Lower leg skin (tissue), 4 donors: ENCODE measurements at regions of chr1 and their contacts with region 1.

Region 1: DNA sequence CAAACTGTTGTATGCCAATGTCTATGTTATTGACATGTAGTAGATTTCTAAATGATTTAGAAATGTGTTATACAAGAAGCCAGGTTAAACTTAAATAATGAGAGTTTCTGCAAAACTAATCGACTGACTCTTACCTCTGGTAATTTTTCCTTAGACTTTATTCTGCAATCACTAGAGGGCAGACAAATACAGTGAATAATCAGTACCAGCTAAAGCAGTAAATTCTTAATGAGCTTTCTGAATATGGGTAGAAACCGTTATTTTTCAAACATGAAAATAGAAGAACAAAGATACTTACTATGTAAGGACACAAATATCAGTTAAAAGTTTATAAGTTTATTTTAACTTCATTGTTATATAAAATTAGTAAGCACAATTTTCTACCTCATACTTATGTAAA is 97.9 kb upstream of the RGS1 start:
- DNase-seq: no peak
- H3K4me3 ChIP-seq: no peak overlapping the region
- CTCF ChIP-seq: no peak
- POLR2A ChIP-seq: no peak

Region 2: GRCh38 chr1:192609110-192610079 is 131.8 kb after region 1 on chr1:
- intact Hi-C with region 1: loop called (anchors 10 kb)
- DNase-seq: peak; percentile 65 to 83
- H3K4me3 ChIP-seq: no peak overlapping the region
- CTCF ChIP-seq: no peak
- POLR2A ChIP-seq: no peak

Region 3: GRCh38 chr1:193019442-193020026 is 541.9 kb after region 1 on chr1:
- intact Hi-C with region 1: loop called (anchors 10 kb)
- DNase-seq: no peak
- H3K4me3 ChIP-seq: no peak overlapping the region
- CTCF ChIP-seq: no peak
- POLR2A ChIP-seq: no peak